HEK293T (cell line): ENCODE measurements at regions of chr3 and their contacts with region 1.

Region 1: GRCh38 chr3:107523539-107524325 is 970 bp downstream of the BBX start:
- DNase-seq: peak; percentile 33

Region 2: GRCh38 chr3:107512108-107512507 is 11.6 kb before region 1 on chr3:
- CTCF ChIA-PET with region 1: no interaction called
- POLR2A ChIA-PET with region 1: interaction called, 12 read pairs
- DNase-seq: no peak

Region 3: DNA sequence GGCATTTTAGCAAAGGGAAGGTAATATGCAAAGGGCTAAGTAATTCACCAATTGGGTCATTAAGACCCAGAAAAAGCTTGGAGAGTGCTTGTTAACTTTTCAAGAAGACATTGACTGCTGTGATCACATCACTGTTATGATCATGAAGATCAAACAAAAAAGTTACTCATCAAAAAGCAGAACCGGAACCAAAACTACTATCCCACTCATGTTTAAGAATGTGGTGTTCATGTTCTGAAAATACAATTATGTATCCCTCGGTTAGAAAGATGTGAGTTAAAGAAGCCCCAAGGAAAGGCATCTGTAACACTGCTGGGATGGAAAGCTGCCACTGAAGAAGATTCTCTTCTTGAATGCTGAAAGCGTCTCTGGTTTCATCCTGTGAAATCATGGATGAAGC is 31.6 kb after region 1 on chr3:
- CTCF ChIA-PET with region 1: no interaction called
- POLR2A ChIA-PET with region 1: no interaction called
- DNase-seq: no peak

Region 4: GRCh38 chr3:107574650-107575049 is 50.9 kb after region 1 on chr3:
- CTCF ChIA-PET with region 1: no interaction called
- POLR2A ChIA-PET with region 1: no interaction called
- DNase-seq: peak; percentile 37